AG04449 (cell line): ENCODE measurements at regions of chr1 and their contacts with region 1.

Region 1: GRCh38 chr1:245837718-245838117 is 669.4 kb downstream of the SMYD3 start:
- DNase-seq: no peak
- H3K4me3 ChIP-seq: no peak overlapping the region
- CTCF ChIP-seq: no peak

Region 2: GRCh38 chr1:245396615-245397014 is 441.1 kb before region 1 on chr1:
- CTCF ChIA-PET with region 1: no interaction called
- POLR2A ChIA-PET with region 1: no interaction called
- DNase-seq: no peak
- H3K4me3 ChIP-seq: no peak overlapping the region
- CTCF ChIP-seq: no peak

Region 3: DNA sequence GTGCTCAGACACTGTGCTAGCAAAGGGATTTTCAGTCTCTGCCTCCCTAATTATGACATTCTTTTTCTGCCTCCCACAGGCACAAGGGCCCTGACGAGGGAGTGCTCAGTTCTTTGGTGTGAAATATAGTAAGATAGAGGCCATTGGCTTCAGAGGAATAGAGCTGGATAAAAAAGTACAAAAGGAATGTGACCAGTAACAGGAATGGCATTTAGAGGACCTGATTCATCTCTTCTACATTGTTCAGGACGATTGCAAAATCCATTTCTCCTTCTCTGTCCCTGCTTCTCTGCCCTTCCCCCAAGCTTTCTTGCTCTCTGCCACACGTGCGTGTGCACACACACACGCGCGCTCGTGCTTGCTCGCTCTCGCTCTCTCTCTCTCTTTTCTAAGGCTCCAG is 14.7 kb before region 1 on chr1:
- CTCF ChIA-PET with region 1: interaction called, 16 read pairs
- POLR2A ChIA-PET with region 1: interaction called, 3 read pairs
- DNase-seq: peak; percentile 87
- H3K4me3 ChIP-seq: no peak overlapping the region
- CTCF ChIP-seq: no peak